Posterior vena cava (tissue), 2 donors: ENCODE measurements at regions of chr16 and their contacts with region 1.

Region 1: GRCh38 chr16:86761111-86762031 is 183.0 kb downstream of the FOXL1 start:
- DNase-seq: peak; percentile 88

Region 2: DNA sequence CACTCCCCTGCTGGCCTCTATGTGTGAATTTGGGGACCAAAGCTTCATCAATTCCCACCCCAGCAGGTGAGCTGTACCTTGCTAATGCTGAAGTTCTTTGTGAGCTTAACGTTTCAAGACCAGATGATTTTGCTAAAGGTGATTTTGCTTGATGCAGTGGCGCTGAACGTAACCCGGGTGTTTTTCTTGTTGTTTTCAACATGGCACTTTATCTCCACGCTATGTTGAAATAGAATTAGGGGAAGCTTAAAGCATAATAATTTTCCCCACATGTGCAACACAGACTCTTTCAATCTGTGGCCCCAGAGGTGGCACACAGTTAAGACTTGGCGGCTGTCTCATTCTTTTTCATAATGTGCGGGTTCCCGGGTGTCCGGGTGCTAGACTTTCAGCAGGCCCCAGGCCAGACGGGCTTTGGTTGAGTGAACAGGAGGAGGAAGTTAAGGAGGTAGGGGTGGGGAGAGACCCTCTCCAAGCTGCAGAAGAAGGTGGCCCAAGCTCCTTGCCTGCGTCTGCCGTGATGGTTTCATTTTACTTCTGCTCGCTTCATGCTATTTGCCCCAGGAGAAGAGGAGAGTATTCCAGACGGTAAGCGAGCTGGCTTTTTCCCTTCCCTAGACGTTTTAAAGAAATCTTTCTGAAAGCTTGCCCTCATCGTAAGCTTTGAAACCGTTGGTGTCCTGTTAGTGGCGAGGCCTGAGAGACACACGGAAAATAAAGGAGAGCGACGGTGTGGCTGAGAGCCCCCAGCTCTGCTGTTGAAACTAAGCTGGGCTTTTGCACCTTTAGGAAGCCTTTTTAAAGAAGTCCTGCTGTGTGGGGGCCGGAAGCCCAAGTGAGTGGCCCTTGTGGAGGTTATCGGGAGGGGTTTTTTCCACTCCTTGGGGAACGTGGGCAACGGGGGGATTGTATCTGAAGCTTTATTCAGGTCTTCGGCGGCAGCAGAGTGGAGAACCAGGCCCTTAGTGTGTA is 190.5 kb before region 1 on chr16:
- intact Hi-C with region 1: loop called in 1 of 2 experiments (anchors 5 kb)
- DNase-seq: no peak

Region 3: DNA sequence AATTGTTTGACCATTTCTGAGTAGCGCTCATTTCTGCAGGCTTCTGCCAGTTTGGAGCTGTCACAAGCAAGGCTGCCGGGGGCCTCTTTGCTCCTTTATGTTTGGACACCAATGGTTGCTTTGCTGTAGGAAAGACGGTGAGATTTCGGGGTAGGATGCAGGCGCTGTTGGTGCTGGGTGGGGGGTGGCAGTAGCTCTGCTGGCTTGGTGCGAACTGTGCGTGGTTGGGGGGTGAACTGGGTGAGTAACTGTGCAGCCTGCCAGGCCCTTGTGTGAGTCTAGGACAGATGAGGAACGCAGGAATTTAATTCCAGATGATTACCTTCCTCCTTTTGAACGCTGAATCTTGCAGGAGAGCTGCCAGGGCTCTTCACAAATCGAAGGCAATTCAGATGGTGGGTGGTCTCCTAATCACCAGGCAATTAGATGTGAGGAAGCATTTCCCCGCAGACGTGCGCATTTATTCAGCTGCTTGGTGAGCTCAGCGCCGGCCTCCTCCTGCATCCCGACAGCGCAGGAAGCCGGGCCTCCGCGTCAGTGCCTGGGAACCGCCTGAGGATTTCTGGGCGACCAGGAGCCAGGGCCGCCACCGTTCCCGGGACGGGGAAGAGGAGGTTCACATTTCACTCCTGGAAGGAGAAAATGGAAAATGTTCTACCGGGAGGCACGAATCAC is 28.6 kb before region 1 on chr16:
- intact Hi-C with region 1: no loop called
- DNase-seq: peak; percentile 72

Region 4: DNA sequence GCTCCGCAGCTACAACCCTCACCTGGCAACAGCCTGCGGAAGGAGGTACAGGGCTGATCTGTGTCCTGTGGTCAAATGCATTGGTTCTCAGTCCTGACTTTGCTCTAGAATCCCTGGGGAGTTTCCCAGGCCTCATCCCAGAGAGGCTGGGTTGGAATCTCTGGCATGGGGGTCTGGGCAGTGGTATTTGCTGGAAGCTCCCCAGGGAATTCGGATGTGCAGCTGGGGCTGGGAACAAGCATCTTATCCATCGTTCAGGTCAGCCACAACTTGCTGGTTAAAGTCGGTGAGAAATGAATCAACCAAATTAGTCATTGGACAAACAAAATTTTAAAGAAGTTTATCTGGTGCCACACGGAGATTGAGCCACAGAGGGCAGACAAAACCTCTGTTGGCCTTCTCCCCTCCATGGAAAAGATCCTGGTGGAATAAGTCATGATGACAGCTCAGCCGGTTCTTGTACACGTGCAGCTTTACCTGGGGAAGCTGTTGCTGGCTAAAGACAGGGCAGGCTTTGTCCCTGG is 48.1 kb after region 1 on chr16:
- intact Hi-C with region 1: loop called in 1 of 2 experiments (anchors 1 kb)
- DNase-seq: no peak

Region 5: DNA sequence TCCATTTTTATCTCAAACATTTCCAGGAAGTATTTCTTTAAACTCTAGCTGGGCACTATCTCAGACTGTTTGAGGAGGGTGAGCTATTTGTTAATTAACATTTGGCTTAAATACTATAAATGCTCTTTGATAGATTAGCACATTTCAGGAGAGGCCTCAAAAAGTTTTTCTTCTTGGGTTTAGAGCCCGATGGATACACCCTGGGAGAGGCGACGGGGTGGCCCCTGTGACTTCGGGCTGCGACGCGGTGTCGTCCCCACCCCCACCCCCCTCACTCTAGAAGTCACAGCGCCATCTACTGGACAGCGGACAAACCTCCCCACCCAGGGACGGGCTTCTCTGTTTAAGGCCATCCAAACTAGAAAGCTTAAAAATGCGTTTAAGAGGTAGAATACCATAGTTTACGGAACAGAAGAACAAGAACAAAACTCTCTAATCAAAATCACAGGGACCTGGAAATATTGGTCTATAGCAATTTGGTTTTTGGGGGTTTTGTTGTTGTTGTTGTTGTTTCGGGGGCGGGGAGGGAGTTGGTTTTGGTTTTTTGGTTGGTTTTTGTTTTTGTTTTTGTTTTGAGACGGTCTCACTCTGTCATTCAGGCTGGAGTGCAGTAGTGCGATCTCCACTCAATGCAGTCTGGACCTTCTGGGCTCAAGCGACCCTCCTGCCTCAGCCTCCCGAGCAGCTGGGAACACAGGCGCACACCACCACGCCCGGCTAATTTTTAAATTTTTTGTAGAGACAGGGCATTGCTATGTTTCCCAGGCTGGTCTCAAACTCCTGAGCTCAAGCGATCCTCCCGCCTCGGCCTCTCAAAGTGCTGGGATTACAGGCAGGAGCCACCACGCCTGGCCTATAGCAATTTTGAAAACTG is 301.4 kb after region 1 on chr16:
- intact Hi-C with region 1: loop called in 1 of 2 experiments (anchors 5 kb)
- DNase-seq: peak; percentile 92